Heart right ventricle (tissue), 16 donors: ENCODE measurements at regions of chr1 and their contacts with region 1.

Region 1: DNA sequence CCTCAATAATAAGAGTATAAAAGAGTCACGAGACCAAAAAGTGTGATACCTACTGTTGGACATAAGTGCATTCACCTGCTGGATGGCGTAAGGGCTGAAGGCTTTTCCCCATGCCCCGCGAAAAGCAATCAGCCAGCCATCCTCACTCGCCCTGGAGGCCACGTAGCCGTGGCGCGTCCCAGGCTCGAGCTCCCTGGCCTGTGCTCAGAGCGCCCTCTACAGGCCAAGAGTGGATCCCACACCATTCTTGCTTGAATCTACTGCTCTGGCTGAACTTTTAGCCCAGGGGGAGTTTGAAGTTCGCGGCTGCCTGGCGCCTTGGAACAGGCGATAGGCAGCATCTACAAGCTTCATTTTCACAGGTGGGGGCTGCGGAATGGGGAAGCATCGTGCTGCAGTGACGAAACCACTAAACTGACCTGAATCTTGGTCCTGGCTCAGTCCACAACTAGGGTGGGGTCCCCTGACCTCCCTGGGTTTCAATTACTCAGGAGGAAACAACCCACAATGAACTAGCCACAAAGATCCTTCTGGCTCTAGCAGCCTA is 70.3 kb upstream of the SERBP1 start:
- DNase-seq: peak; percentile 78 to 80
- ATAC-seq: peak; percentile 93 to 98 (median 95)
- H3K4me3 ChIP-seq: no peak overlapping the region
- H3K27ac ChIP-seq: no peak overlapping the region
- H3K4me1 ChIP-seq: peaks cover 0 to 7% (median 0%) of the 10 kb centered on the region in 9 donors
- H3K27me3 ChIP-seq: peaks cover 0 to 16% (median 0%) of the 10 kb centered on the region in 7 donors
- CTCF ChIP-seq: peak; percentile 97 to 100 (median 98)

Region 2: GRCh38 chr1:67230539-67230938 is 269.9 kb before region 1 on chr1:
- intact Hi-C with region 1: loop called in 9 of 10 experiments (anchors 1 to 10 kb)
- DNase-seq: no peak
- ATAC-seq: no peak
- H3K4me3 ChIP-seq: no peak overlapping the region
- H3K27ac ChIP-seq: no peak overlapping the region
- H3K4me1 ChIP-seq: no peaks in the 10 kb centered on the region
- H3K27me3 ChIP-seq: peaks cover 0 to 6% (median 0%) of the 10 kb centered on the region in 7 donors
- CTCF ChIP-seq: no peak

Region 3: GRCh38 chr1:67239738-67240137 is 260.7 kb before region 1 on chr1:
- intact Hi-C with region 1: loop called in 9 of 10 experiments (anchors 1 to 10 kb)
- DNase-seq: no peak
- ATAC-seq: no peak
- H3K4me3 ChIP-seq: no peak overlapping the region
- H3K27ac ChIP-seq: no peak overlapping the region
- H3K4me1 ChIP-seq: no peaks in the 10 kb centered on the region
- H3K27me3 ChIP-seq: no peaks in the 10 kb centered on the region
- CTCF ChIP-seq: no peak

Region 4: GRCh38 chr1:67347688-67348472 is 152.6 kb before region 1 on chr1:
- intact Hi-C with region 1: loop called in 5 of 10 experiments (anchors 1 to 5 kb)
- DNase-seq: peak; percentile 20 to 46
- ATAC-seq: peak in 7 of 8 donors; percentile 76 to 89 (median 82)
- H3K4me3 ChIP-seq: no peak overlapping the region
- H3K27ac ChIP-seq: no peak overlapping the region
- H3K4me1 ChIP-seq: peaks cover 0 to 4% (median 0%) of the 10 kb centered on the region in 9 donors
- H3K27me3 ChIP-seq: no peaks in the 10 kb centered on the region
- CTCF ChIP-seq: peak; percentile 46 to 84 (median 76)

Region 5: DNA sequence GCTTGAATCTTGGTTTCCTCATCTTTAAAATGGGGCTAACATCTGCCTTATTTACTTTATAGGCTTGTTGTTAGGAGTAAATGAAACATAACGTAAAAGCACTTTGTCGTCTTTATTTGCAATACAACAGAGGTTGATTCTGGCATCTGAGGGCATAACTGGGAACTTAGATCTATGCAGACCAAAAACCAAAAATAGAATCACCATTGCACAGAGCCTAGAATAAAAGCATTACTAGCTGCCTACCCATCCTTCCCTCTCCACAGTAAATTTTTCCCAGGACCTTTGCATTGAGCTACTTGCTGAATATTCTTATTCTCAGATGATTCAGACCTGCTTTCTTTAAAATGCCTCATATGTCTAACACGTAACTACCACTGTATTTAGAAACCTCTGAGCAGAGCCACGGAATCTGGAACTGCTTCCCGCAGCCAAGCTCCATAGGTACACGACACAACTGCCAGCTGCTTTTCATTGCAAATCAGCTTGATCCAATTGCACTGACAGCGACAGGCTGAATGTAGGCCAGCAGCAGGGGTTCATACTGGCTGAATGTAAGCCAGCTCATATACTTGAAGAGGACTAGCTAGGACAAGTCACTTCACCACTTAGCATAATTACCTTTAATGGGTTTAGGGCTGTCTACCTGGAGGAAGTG is 37.1 kb before region 1 on chr1:
- intact Hi-C with region 1: no loop called
- DNase-seq: no peak
- ATAC-seq: peak in 1 of 8 donors; percentile 47
- H3K4me3 ChIP-seq: no peak overlapping the region
- H3K27ac ChIP-seq: peak overlapping the region in 8 of 10 donors; percentile 2 to 83 (median 58)
- H3K4me1 ChIP-seq: peaks cover 5 to 54% (median 25%) of the 10 kb centered on the region in 9 donors
- H3K27me3 ChIP-seq: no peaks in the 10 kb centered on the region
- CTCF ChIP-seq: no peak

Region 6: DNA sequence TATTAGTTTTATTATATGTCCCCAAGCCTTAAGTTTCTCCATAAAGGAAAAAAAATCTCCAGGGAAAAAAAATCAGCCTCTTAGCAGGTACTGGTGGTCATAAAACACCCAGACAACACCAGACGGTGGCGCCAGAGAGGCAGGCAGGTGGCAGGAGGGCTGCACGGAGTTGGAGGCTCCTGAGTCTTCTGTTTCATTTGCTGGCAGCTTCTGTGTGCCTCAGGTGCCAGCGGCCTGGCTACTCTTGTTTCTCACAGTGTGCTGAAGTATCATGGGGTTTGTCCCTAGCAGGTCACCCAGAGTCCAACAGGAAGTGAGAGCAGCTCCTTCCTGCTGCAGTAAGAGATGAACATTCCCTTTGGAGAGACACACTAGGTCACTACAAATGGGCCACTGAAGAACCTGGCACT is 61.2 kb after region 1 on chr1:
- intact Hi-C with region 1: no loop called
- DNase-seq: peak; percentile 92 to 93
- ATAC-seq: peak; percentile 69 to 91 (median 78)
- H3K4me3 ChIP-seq: no peak overlapping the region
- H3K27ac ChIP-seq: peak overlapping the region in 9 of 10 donors; percentile 10 to 64 (median 54)
- H3K4me1 ChIP-seq: peaks cover 0 to 42% (median 29%) of the 10 kb centered on the region in 9 donors
- H3K27me3 ChIP-seq: no peaks in the 10 kb centered on the region
- CTCF ChIP-seq: peak; percentile 76 to 92 (median 88)

Region 7: GRCh38 chr1:67735806-67736627 is 235.5 kb after region 1 on chr1:
- intact Hi-C with region 1: no loop called
- DNase-seq: peak; percentile 54 to 81
- ATAC-seq: peak; percentile 79 to 94 (median 86)
- H3K4me3 ChIP-seq: peak overlapping the region in 5 of 10 donors; percentile 8 to 34 (median 11)
- H3K27ac ChIP-seq: peak overlapping the region; percentile 49 to 84 (median 69)
- H3K4me1 ChIP-seq: peaks cover 15 to 67% (median 55%) of the 10 kb centered on the region in 9 donors
- H3K27me3 ChIP-seq: no peaks in the 10 kb centered on the region
- CTCF ChIP-seq: no peak